ENCODE measurements at regions of chr4 and their contacts with region 1.

Region 1: GRCh38 chr4:76430519-76431388 is 4.3 kb upstream of the SHROOM3 start:
- DNase-seq: no peak
- H3K4me3 ChIP-seq: peak overlapping the region in 16 of 59 donors; percentile 14 to 48 (median 30)
- H3K27ac ChIP-seq: no peak overlapping the region
- H3K27me3 ChIP-seq: no peaks in the 10 kb centered on the region
- CTCF ChIP-seq: peak; percentile 40 to 93 (median 74)

Region 2: GRCh38 chr4:76504613-76505465 is 74.1 kb after region 1 on chr4:
- intact Hi-C with region 1: loop called (anchors 2 kb)
- DNase-seq: no peak
- H3K4me3 ChIP-seq: no peak overlapping the region
- H3K27ac ChIP-seq: no peak overlapping the region
- H3K27me3 ChIP-seq: no peaks in the 10 kb centered on the region
- CTCF ChIP-seq: peak in 55 of 56 donors; percentile 49 to 88 (median 69)

Region 3: DNA sequence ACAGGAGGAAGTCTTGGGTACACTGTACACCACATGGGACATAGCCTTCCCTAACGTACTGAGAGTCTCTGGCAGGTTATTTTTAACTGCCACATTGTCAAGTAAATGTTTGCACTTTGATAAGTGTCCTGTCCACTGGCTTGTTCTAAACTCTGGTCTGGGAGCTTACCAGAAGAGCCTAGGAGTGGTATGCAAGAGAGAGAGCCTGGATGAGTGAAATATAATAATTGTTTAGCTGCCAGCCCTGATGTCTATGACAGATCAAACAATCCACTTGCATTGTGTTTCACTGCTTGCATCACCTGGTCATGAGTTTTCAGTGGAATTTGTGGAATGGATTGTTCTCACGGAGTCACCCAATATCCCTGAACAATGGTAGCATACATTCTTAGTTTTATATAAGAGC is 95.8 kb after region 1 on chr4:
- intact Hi-C with region 1: no loop called
- DNase-seq: no peak
- H3K4me3 ChIP-seq: no peak overlapping the region
- H3K27ac ChIP-seq: no peak overlapping the region
- H3K27me3 ChIP-seq: no peaks in the 10 kb centered on the region
- CTCF ChIP-seq: no peak

Region 4: GRCh38 chr4:76752861-76753501 is 322.2 kb after region 1 on chr4:
- intact Hi-C with region 1: loop called in 1 of 2 experiments (anchors 5 kb)
- DNase-seq: peak in 2 of 10 donors; percentile 30 to 51
- H3K4me3 ChIP-seq: peak overlapping the region in 4 of 59 donors; percentile 1 to 17 (median 10)
- H3K27ac ChIP-seq: peak overlapping the region in 39 of 59 donors; percentile 1 to 74 (median 49)
- H3K27me3 ChIP-seq: peaks cover 0 to 6% (median 0%) of the 10 kb centered on the region in 45 donors
- CTCF ChIP-seq: no peak